AG04450 (cell line): ENCODE measurements at regions of chr4 and their contacts with region 1.

Region 1: GRCh38 chr4:17447675-17448298 is 64.1 kb downstream of the QDPR start:
- DNase-seq: peak; percentile 50
- H3K4me3 ChIP-seq: no peak overlapping the region
- H3K27ac ChIP-seq: no peak overlapping the region
- H3K27me3 ChIP-seq: no peaks in the 10 kb centered on the region
- CTCF ChIP-seq: peak; percentile 84

Region 2: GRCh38 chr4:16642895-16643294 is 804.9 kb before region 1 on chr4:
- CTCF ChIA-PET with region 1: interaction called, 10 read pairs
- POLR2A ChIA-PET with region 1: no interaction called
- DNase-seq: no peak
- H3K4me3 ChIP-seq: no peak overlapping the region
- H3K27ac ChIP-seq: no peak overlapping the region
- H3K27me3 ChIP-seq: no peaks in the 10 kb centered on the region
- CTCF ChIP-seq: peak; percentile 45

Region 3: DNA sequence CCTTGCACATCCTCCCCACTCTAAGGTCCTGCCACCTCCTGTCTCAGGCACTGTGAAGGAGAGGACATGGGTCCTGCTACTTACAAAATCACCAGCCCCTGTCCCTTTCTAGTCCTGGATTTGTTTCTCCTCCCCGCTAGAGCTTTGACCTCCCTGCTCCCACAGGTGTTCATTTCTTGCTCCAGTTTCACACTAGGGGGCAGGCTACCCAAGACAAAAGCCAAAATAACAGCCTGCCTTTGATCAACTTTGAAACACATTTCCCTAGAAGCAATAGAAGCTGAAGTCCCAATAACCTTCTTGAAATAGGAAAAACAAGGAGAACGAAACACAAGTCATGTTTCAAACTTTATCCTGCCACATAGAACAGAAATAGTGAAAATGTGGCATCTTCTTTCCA is 100.3 kb before region 1 on chr4:
- CTCF ChIA-PET with region 1: interaction called, 46 read pairs
- POLR2A ChIA-PET with region 1: no interaction called
- DNase-seq: no peak
- H3K4me3 ChIP-seq: no peak overlapping the region
- H3K27ac ChIP-seq: no peak overlapping the region
- H3K27me3 ChIP-seq: no peaks in the 10 kb centered on the region
- CTCF ChIP-seq: peak; percentile 68

Region 4: DNA sequence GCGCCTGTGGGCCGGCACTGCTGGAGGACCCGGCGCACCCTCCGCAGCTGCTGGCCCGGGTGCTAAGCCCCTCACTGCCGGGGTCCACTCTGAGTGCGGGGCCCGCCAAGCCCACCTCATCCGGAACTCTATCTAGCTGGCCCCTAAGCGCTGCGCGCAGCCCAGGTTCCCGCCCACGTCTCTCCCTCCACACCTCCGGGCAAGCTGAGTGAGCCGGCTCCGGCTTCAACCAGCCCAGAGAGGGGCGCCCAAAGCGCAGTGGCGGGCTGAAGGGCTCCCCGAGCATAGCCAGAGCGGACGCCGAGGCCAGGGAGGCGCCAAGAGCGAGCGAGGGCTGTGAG is 11.1 kb before region 1 on chr4:
- CTCF ChIA-PET with region 1: interaction called, 13 read pairs
- POLR2A ChIA-PET with region 1: no interaction called
- DNase-seq: no peak
- H3K4me3 ChIP-seq: no peak overlapping the region
- H3K27ac ChIP-seq: no peak overlapping the region
- H3K27me3 ChIP-seq: no peaks in the 10 kb centered on the region
- CTCF ChIP-seq: no peak

Region 5: DNA sequence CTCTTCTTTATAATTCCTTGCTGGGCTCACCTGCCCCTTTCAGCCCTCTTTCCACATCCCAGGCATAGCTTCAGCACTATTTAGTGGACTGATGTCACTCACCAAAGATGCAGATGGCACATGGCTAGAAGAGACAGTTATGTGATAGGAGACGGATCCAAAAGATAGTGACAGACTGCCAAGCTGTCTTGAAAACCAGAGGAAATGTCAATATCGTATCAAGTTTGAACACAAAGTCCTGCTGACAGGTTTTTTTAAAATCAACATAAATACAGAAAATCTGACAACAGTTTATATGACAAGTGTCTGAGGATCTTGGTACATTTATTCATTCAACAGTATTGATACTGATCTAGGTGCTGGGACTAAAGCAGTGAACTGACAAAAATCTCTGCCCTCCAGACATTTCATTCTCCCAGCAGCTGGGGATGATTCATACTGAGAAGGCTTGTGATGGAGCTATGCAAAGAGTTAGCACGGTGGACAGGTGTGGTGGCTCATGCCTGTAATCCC is 81.7 kb after region 1 on chr4:
- CTCF ChIA-PET with region 1: no interaction called
- POLR2A ChIA-PET with region 1: no interaction called
- DNase-seq: no peak
- H3K4me3 ChIP-seq: no peak overlapping the region
- H3K27ac ChIP-seq: no peak overlapping the region
- H3K27me3 ChIP-seq: peaks cover 4% of the 10 kb centered on the region
- CTCF ChIP-seq: no peak

Region 6: GRCh38 chr4:17797808-17798207 is 350.0 kb after region 1 on chr4:
- CTCF ChIA-PET with region 1: no interaction called
- POLR2A ChIA-PET with region 1: no interaction called
- DNase-seq: no peak
- H3K4me3 ChIP-seq: no peak overlapping the region
- H3K27ac ChIP-seq: no peak overlapping the region
- H3K27me3 ChIP-seq: no peaks in the 10 kb centered on the region
- CTCF ChIP-seq: no peak